G401 (cell line): ENCODE measurements at regions of chr12 and their contacts with region 1.

Region 1: GRCh38 chr12:678747-679712 is 15.8 kb upstream of the NINJ2 start:
- DNase-seq: no peak

Region 2: GRCh38 chr12:607526-608001 is 71.5 kb before region 1 on chr12:
- in situ Hi-C with region 1: no loop called
- DNase-seq: peak; percentile 62

Region 3: GRCh38 chr12:730550-730949 is 51.5 kb after region 1 on chr12:
- in situ Hi-C with region 1: loop called (anchors 5 kb)
- DNase-seq: no peak